ENCODE measurements at regions of chr16 and their contacts with region 1.

Region 1: DNA sequence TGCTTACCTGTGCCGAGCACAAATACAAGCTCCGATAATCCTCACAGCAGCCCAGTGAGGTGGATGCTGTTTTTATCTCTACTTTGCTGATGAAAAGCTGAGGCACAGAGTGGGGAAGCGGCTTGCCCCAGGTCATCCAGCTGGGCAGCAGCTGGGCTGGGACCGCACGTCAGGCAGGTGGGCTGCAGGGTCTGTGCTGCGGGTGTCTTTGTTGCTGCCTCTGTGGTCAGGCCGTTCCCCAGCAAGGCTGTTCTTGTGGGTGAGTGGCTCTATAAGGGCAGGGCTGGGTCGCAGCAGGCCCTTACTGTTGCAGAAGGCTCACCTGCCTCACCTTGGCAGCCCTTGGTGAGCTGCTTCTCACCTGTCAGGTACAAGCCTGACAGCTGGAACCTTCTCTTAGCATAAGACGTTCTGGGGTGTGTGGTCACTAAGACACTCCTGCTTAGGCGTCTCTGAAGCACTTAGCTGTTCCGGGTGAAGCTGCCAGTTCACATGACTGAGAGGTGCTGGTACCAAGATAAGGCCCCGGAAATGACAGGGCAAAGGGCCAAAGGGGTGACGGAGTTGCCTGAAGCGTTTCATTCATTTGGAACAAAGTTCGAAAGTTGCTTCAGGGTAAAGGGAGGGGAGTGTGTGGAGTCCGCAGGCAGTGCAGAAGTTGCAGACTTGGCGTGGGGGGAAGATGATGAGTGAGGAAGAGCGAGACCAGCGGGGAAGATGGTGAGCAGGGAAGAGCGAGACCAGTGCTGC is 17.4 kb downstream of the IRF8 start:
- DNase-seq: no peak
- ATAC-seq: no peak
- H3K4me3 Mint-ChIP-seq: no peak overlapping the region
- H3K27ac Mint-ChIP-seq: peak overlapping the region; percentile 44
- H3K4me1 Mint-ChIP-seq: peaks cover 31% of the 10 kb centered on the region
- H3K27me3 Mint-ChIP-seq: no peaks in the 10 kb centered on the region
- CTCF ChIP-seq: no peak

Region 2: DNA sequence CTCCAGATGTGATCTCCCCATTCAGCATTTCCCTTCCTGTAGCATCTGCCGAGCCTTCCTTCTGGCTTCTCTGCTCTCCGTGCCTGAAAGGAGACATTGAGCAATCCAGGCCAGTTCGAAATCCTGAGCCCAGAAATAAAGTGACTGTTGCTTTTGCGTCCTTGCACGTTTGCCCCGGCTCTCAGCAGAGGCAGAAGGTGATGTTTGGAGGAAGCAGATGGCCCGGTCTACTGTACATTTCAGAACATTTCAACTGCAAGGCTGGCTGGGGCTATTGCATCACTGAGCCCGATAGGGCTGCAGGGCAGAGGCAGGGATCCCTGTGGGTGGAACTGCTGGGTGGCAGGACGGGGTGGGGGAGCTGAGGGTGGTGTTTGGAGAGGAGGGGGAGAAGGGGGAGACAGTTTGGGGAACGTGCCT is 12.1 kb after region 1 on chr16:
- CTCF ChIA-PET with region 1: interaction called, 3 read pairs
- POLR2A ChIA-PET with region 1: interaction called, 17 read pairs
- intact Hi-C with region 1: no loop called
- DNase-seq: no peak
- ATAC-seq: no peak
- H3K4me3 Mint-ChIP-seq: peak overlapping the region; percentile 15
- H3K27ac Mint-ChIP-seq: no peak overlapping the region
- H3K4me1 Mint-ChIP-seq: peaks cover 61% of the 10 kb centered on the region
- H3K27me3 Mint-ChIP-seq: no peaks in the 10 kb centered on the region
- CTCF ChIP-seq: no peak

Measured in activated CD8-positive, alpha-beta T cell treated with anti-CD3 and anti-CD28 coated beads for 36 hours (primary cell).